ENCODE measurements at regions of chr7 and their contacts with region 1.

Region 1: DNA sequence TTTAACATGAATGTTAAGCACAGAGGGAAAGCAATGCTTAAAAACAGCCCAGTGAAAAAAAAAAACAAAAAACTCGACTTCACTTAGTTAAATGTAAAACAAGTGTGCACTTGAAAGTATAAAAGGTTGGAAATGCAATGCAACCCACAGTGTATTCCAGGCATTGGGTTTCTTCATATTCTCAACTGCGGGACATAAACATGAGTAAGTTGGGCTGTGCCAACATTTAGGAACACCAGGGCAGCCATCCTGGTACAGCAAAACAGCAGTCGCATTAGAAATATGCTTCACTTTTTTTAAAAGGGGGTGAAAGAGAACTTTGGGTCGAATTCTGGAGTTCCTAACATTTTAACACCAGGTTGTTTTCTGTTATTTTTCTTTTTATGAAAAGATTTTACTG is 937 bp downstream of the STEAP1 start:
- DNase-seq: no peak
- ATAC-seq: no peak
- H3K4me3 ChIP-seq: peak overlapping the region; percentile 13 to 82 (median 74); a peak in 3 of 6 replicates
- H3K27ac ChIP-seq: no peak overlapping the region
- H3K4me1 ChIP-seq: peaks cover 16% of the 10 kb centered on the region
- H3K27me3 ChIP-seq: no peaks in the 10 kb centered on the region
- CTCF ChIP-seq: no peak
- EP300 ChIP-seq: no peak
- POLR2A ChIP-seq: no peak
- RAD21 ChIP-seq: no peak

Region 2: GRCh38 chr7:89966067-89966665 is 189.0 kb before region 1 on chr7:
- CTCF ChIA-PET with region 1: no interaction called
- POLR2A ChIA-PET with region 1: no interaction called
- in situ Hi-C with region 1: no loop called
- intact Hi-C with region 1: no loop called
- DNase-seq: no peak
- ATAC-seq: no peak
- H3K4me3 ChIP-seq: no peak overlapping the region
- H3K27ac ChIP-seq: no peak overlapping the region
- H3K4me1 ChIP-seq: no peaks in the 10 kb centered on the region
- H3K27me3 ChIP-seq: no peaks in the 10 kb centered on the region
- CTCF ChIP-seq: no peak
- EP300 ChIP-seq: no peak
- POLR2A ChIP-seq: no peak
- RAD21 ChIP-seq: no peak

Region 3: GRCh38 chr7:90165724-90166123 is 10.5 kb after region 1 on chr7:
- CTCF ChIA-PET with region 1: no interaction called
- POLR2A ChIA-PET with region 1: no interaction called
- in situ Hi-C with region 1: no loop called
- intact Hi-C with region 1: no loop called
- DNase-seq: no peak
- ATAC-seq: no peak
- H3K4me3 ChIP-seq: no peak overlapping the region
- H3K27ac ChIP-seq: no peak overlapping the region
- H3K4me1 ChIP-seq: no peaks in the 10 kb centered on the region
- H3K27me3 ChIP-seq: no peaks in the 10 kb centered on the region
- CTCF ChIP-seq: no peak
- EP300 ChIP-seq: no peak
- POLR2A ChIP-seq: no peak
- RAD21 ChIP-seq: no peak

Region 4: DNA sequence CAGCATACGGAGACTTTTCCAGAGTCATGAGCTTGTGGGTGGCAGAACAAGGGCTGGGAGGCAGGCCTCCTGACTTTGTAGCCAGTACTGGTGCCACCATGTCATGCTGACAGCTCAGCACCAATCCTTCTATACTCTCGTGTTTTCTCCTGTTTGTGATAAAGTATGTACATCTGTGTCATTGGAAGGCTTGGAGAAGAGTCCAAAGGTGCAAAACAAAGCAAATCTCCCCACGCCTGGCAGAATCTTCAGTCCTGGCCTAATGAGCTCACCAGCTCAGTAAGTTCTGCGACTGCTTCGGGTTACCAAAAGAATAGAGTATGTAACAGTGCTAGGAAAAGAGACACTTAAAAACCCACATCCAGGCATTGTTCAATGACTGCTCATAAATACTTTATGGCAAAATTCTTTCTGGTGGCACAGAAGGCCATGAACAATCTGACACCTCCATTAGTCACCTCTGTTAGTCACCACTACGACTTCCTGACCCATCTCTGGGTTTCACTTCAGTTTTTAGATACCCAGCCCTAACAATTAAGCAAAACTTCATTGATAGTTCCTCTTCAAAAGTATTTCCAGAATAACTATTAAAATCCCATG is 23.6 kb after region 1 on chr7:
- CTCF ChIA-PET with region 1: no interaction called
- POLR2A ChIA-PET with region 1: interaction called, 13 read pairs
- in situ Hi-C with region 1: no loop called
- intact Hi-C with region 1: loop called (anchors 2 kb)
- DNase-seq: peak; percentile 41
- ATAC-seq: peak; percentile 79
- H3K4me3 ChIP-seq: peak overlapping the region in 1 of 3 experiments; percentile 9; a peak in 2 of 6 replicates
- H3K27ac ChIP-seq: peak overlapping the region; percentile 29
- H3K4me1 ChIP-seq: peaks cover 38% of the 10 kb centered on the region
- H3K27me3 ChIP-seq: no peaks in the 10 kb centered on the region
- CTCF ChIP-seq: no peak
- EP300 ChIP-seq: no peak; a peak in 1 of 4 replicates
- POLR2A ChIP-seq: no peak
- RAD21 ChIP-seq: no peak

Region 5: DNA sequence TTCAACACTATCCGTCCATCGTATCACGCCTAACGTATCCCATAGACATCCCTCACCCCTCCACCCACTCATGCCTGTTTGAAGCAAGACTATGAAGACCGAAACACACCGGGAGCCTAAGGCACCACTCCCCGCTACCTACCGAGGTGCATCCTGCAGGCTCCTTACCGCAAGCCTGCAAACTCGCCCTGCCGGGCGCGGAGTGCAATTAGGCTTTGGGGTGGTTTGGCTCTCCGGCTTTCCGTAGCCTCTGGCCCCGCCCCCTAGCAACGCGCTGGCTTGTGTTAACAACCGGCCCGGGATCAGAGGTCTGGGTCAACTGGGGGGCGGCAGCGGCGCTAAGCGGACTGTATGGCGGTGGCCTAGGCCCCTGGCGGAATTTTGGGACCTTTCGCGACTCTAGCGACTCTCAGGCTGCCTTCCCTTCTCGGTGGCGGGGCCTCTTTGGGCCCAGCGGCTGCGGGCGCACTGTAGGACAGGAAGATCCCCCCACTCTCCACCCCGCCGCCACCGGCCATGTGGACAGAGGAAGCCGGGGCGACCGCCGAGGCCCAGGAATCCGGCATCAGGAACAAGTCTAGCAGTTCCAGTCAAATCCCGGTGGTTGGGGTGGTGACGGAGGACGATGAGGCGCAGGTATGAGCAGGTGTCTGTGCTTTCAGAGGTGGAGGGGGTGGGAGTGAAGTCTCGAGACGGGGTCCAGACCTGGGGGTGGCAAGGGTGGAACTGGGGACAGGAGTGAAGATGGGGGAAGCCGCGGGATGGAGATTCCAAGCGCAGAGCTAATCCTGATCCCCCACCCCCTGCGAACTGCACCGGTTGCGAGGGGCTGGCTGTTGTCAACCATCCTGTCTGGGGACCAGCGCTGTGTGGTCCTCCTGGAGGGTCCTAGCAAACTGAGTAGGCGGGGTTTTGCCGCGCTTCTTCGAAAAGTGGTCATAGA is 90.0 kb after region 1 on chr7 and contains the start of gene CFAP69:
- CTCF ChIA-PET with region 1: no interaction called
- POLR2A ChIA-PET with region 1: interaction called, 3 read pairs
- in situ Hi-C with region 1: no loop called
- intact Hi-C with region 1: loop called (anchors 5 kb)
- DNase-seq: peak; percentile 78
- ATAC-seq: peak; percentile 90
- H3K4me3 ChIP-seq: peak within 1 kb of the TSS; percentile 61 to 91 (median 76)
- H3K27ac ChIP-seq: peak within 1 kb of the TSS; percentile 51
- H3K4me1 ChIP-seq: peaks cover 29% of the 10 kb centered on the region
- H3K27me3 ChIP-seq: no peaks in the 10 kb centered on the region
- CTCF ChIP-seq: peak; percentile 53; the same call in 1 of the 2 replicates
- EP300 ChIP-seq: peak; percentile 20 to 38; a peak in 2 of 4 replicates
- POLR2A ChIP-seq: peak; percentile 33 to 82; a peak in 2 of 4 replicates
- RAD21 ChIP-seq: peak; percentile 39; the same call in 1 of the 2 replicates
- total RNA-seq, gene CFAP69: 2.7 and 4.0 TPM in 2 replicates

Region 6: GRCh38 chr7:90298145-90299038 is 143.2 kb after region 1 on chr7:
- CTCF ChIA-PET with region 1: interaction called, 10 read pairs
- POLR2A ChIA-PET with region 1: no interaction called
- in situ Hi-C with region 1: no loop called
- intact Hi-C with region 1: loop called (anchors 1 kb)
- DNase-seq: peak; percentile 54
- ATAC-seq: peak; percentile 99
- H3K4me3 ChIP-seq: no peak overlapping the region
- H3K27ac ChIP-seq: no peak overlapping the region
- H3K4me1 ChIP-seq: no peaks in the 10 kb centered on the region
- H3K27me3 ChIP-seq: no peaks in the 10 kb centered on the region
- CTCF ChIP-seq: peak; percentile 83
- EP300 ChIP-seq: no peak
- POLR2A ChIP-seq: no peak
- RAD21 ChIP-seq: peak; percentile 48; the same call in 1 of the 2 replicates

Region 7: DNA sequence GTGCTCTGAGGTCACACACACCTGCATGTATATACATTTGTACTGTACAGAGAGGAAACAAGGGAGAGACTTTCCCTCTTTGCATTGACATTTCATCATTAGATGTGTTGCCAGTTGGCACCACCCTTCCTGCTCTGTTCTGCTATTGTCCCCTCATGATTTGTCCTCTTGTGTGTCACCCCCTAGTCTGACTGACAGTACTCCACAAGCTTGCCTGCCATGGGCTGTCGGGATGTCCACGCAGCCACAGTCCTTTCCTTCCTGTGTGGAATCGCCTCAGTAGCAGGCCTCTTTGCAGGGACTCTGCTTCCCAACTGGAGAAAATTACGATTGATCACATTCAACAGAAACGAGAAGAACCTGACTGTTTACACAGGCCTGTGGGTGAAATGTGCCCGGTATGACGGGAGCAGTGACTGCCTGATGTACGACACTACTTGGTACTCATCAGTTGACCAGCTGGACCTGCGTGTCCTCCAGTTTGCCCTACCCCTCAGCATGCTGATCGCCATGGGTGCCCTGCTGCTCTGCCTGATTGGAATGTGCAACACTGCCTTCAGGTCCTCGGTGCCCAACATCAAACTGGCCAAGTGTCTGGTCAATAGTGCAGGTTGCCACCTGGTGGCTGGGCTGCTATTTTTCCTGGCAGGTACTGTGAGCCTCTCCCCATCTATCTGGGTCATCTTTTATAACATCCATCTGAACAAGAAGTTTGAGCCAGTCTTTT is 257.4 kb after region 1 on chr7:
- CTCF ChIA-PET with region 1: no interaction called
- POLR2A ChIA-PET with region 1: no interaction called
- in situ Hi-C with region 1: loop called (anchors 10 kb)
- intact Hi-C with region 1: loop called (anchors 5 kb)
- DNase-seq: peak; percentile 44
- ATAC-seq: peak; percentile 94
- H3K4me3 ChIP-seq: no peak overlapping the region
- H3K27ac ChIP-seq: no peak overlapping the region
- H3K4me1 ChIP-seq: peaks cover 50% of the 10 kb centered on the region
- H3K27me3 ChIP-seq: no peaks in the 10 kb centered on the region
- CTCF ChIP-seq: peak; percentile 67
- EP300 ChIP-seq: no peak
- POLR2A ChIP-seq: no peak
- RAD21 ChIP-seq: 0 out of 2 replicates have a peak, but pooled peaks have one; percentile 22